ENCODE measurements at regions of chr11 and their contacts with region 1.

Region 1: DNA sequence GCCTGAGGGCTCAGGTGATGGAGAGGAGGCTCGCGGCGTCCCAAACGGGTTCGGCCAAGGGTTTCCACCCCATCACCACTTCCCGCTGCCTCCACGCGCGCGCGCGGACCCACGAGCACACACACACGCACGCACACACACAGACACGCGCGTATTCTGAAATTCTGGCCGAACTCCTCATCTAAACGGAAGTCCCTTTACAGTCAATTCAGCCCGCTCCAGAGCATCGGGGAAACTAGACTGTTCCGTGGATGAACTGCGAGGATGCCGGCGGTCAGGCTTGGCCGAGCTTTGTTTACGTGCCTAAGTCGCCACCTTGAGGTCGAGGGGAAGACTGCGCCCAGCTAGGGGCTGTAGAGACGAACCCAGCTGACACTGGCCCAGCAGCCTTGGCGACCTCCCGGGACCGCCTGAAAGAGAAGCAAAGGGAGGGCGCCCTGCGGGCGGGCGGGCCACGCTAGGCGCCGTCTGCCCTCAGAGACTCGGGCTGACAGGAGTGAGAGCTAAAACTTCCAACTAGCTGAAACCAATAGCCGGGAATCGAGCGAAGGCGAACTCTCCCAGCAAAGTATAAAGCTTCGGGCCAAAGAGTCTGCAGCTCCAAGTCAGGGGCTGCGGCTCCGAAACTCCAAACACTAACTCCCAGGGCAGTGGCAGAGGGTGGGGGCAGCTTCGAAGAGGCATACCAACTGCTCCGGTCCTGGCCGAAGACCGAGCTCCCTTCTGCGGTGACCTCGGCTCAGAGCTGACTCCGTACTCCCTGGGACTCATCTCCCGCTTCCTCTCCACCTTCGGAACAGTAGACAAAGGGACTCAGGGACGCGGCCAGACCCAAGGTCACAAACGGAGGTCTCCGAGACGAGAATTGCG is 124.7 kb upstream of the C11orf58 start:
- DNase-seq: peak; percentile 84
- H3K4me3 Mint-ChIP-seq: peak overlapping the region; percentile 73
- H3K27ac Mint-ChIP-seq: peak overlapping the region; percentile 49
- H3K4me1 Mint-ChIP-seq: peaks cover 16% of the 10 kb centered on the region
- H3K27me3 Mint-ChIP-seq: peaks cover 23% of the 10 kb centered on the region
- CTCF ChIP-seq: peak; percentile 95

Region 2: GRCh38 chr11:15327786-15328231 is 1285.9 kb before region 1 on chr11:
- CTCF ChIA-PET with region 1: interaction called, 10 read pairs
- POLR2A ChIA-PET with region 1: no interaction called
- intact Hi-C with region 1: loop called (anchors 1 kb)
- DNase-seq: peak; percentile 62
- H3K4me3 Mint-ChIP-seq: no peak overlapping the region
- H3K27ac Mint-ChIP-seq: no peak overlapping the region
- H3K4me1 Mint-ChIP-seq: no peaks in the 10 kb centered on the region
- H3K27me3 Mint-ChIP-seq: peaks cover 35% of the 10 kb centered on the region
- CTCF ChIP-seq: peak; percentile 64

Region 3: GRCh38 chr11:15650105-15650938 is 963.4 kb before region 1 on chr11:
- CTCF ChIA-PET with region 1: interaction called, 27 read pairs
- POLR2A ChIA-PET with region 1: interaction called, 3 read pairs
- intact Hi-C with region 1: loop called (anchors 1 kb)
- DNase-seq: peak; percentile 92
- H3K4me3 Mint-ChIP-seq: peak overlapping the region; percentile 7
- H3K27ac Mint-ChIP-seq: no peak overlapping the region
- H3K4me1 Mint-ChIP-seq: no peaks in the 10 kb centered on the region
- H3K27me3 Mint-ChIP-seq: peaks cover 14% of the 10 kb centered on the region
- CTCF ChIP-seq: peak; percentile 97

Region 4: GRCh38 chr11:15819679-15820286 is 794.0 kb before region 1 on chr11:
- CTCF ChIA-PET with region 1: interaction called, 25 read pairs
- POLR2A ChIA-PET with region 1: no interaction called
- intact Hi-C with region 1: no loop called
- DNase-seq: peak; percentile 72
- H3K4me3 Mint-ChIP-seq: no peak overlapping the region
- H3K27ac Mint-ChIP-seq: no peak overlapping the region
- H3K4me1 Mint-ChIP-seq: peaks cover 38% of the 10 kb centered on the region
- H3K27me3 Mint-ChIP-seq: no peaks in the 10 kb centered on the region
- CTCF ChIP-seq: peak; percentile 87

Region 5: GRCh38 chr11:16191212-16191867 is 422.4 kb before region 1 on chr11:
- CTCF ChIA-PET with region 1: interaction called, 10 read pairs
- POLR2A ChIA-PET with region 1: interaction called, 3 read pairs
- intact Hi-C with region 1: loop called (anchors 1 kb)
- DNase-seq: no peak
- H3K4me3 Mint-ChIP-seq: no peak overlapping the region
- H3K27ac Mint-ChIP-seq: no peak overlapping the region
- H3K4me1 Mint-ChIP-seq: peaks cover 10% of the 10 kb centered on the region
- H3K27me3 Mint-ChIP-seq: no peaks in the 10 kb centered on the region
- CTCF ChIP-seq: no peak